Activated CD4-positive, alpha-beta T cell treated with anti-CD3 and anti-CD28 coated beads, Interleukin-2, amount 10 ng/mL, durations not matched to agents 24 days and 14 days (primary cell): ENCODE measurements at regions of chr4 and their contacts with region 1.

Region 1: DNA sequence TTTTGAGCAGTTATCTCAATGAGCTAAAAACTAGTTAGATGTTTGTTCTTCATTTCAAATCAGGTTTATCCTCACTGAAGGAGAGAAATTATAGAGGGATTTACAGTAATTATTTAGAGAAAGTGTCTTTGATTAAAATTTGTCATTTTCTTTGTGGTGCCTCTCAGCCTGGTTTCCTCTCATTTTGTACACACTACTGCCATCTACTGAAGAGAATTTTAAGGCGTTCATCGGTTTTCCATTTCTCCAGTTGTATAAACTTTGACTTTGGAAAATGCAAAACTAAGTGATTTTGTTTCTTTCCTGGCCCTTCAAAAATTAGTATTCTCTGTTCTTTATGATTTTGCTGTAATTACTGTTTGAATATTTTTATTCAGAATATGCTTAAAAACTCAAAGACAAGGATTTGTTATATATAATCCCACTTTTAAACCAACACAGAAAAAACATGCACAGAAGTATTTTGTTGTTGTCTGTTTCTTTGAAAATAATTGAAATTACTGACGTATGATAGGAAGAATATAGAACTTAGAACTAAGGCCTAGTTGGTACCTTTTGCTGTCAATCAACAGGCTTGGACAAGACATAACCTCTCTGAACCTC is 34.4 kb upstream of the ANXA3 start:
- DNase-seq: no peak
- H3K4me3 Mint-ChIP-seq: no peak overlapping the region
- H3K27ac Mint-ChIP-seq: no peak overlapping the region
- H3K4me1 Mint-ChIP-seq: peaks cover 2% of the 10 kb centered on the region
- H3K27me3 Mint-ChIP-seq: peaks cover 17% of the 10 kb centered on the region

Region 2: DNA sequence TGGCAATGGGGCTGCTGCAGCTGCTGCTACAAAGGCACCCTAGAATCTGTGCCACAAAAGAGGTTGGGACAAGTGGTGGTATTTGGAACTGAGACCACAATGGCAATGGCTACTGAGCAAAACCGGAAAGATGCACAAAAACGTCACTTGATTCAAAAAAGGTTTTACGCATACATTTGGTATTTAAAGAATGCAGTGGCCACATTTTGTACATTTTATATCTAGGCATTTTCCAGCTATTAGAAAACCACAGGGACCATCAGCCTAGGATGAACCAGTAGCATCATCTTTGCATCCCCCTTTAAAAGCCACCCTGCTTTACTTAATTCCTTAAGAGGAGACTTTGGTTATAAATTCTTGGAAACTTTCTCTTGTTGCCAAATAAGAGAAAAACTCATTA is 1016.4 kb before region 1 on chr4:
- intact Hi-C with region 1: no loop called
- DNase-seq: no peak
- H3K4me3 Mint-ChIP-seq: no peak overlapping the region
- H3K27ac Mint-ChIP-seq: no peak overlapping the region
- H3K4me1 Mint-ChIP-seq: no peaks in the 10 kb centered on the region
- H3K27me3 Mint-ChIP-seq: peaks cover 8% of the 10 kb centered on the region

Region 3: GRCh38 chr4:77959566-77960338 is 557.4 kb before region 1 on chr4:
- intact Hi-C with region 1: loop called (anchors 1 kb)
- DNase-seq: peak; percentile 61
- H3K4me3 Mint-ChIP-seq: no peak overlapping the region
- H3K27ac Mint-ChIP-seq: no peak overlapping the region
- H3K4me1 Mint-ChIP-seq: peaks cover 6% of the 10 kb centered on the region
- H3K27me3 Mint-ChIP-seq: no peaks in the 10 kb centered on the region

Region 4: DNA sequence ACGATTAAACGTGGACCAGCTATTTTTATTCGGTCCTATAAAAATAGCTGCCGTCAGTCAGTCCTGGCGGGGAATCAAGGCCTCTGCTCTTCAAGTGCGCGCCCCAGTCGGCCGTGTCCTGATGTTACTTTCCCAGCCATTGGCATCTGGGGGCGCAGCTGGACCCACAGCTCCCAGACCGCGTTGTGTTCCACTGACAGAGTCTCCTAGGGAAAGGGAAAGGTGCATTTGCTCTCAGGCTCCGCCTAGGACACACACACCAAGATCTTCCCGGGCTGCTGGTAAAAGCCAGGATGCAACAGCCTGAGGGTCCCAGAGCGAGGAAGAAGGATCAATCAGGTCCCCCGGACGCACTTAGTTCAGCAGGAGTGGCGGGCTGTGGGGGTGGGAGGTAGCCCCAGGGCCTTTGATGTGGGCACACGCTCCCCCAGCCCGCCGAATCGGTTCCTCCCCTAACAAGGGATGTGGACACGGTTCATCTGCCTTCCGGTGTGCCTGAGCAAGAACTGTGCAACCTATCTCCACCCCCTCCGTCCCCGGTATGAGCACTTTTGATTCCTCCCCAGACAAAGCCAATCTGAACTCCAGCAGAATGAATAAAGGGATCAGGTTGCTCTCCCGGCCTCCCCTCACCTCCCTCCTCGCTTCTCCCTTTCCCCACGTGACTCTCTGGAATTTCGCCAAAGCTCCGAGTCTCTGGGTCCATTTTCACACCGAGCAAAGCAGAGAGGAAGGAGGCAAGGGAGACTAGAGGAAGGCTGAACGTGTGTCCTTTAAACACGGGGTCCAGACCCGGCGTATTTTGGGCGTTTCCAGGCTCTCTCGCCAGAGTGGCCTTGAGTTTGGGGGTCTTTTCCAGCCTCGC is 460.7 kb before region 1 on chr4:
- intact Hi-C with region 1: loop called (anchors 5 kb)
- DNase-seq: peak; percentile 74
- H3K4me3 Mint-ChIP-seq: peak overlapping the region; percentile 88
- H3K27ac Mint-ChIP-seq: no peak overlapping the region
- H3K4me1 Mint-ChIP-seq: peaks cover 26% of the 10 kb centered on the region
- H3K27me3 Mint-ChIP-seq: peaks cover 71% of the 10 kb centered on the region